T-cell (primary cell): ENCODE measurements at regions of chr19 and their contacts with region 1.

Region 1: DNA sequence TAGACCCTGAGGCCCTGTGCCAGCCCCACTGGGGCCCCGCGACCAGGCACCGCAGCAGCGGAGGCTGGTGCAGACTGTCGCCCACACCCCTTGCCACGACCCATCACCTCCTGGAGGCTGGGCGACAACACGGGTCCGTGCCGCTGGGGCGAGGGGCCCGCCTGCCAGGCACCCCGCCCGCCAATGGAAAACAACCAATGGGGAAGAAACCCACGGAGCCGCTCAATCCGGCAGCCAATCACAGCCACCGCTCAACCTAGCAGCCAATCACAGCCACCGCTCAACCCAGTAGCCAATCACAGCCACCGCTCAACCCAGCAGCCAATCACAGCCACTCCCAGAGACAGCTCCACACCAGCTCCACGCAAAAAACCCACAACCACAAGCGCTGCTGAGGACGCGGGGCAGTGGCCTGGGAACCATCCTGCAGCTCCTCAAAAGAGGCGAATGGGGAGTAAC is 29.7 kb downstream of the GPX4 start:
- DNase-seq: peak; percentile 40 to 90 (median 77)
- ATAC-seq: peak; percentile 24 to 60 (median 46)
- H3K4me3 ChIP-seq: peak overlapping the region in 1 of 2 donors; percentile 95
- H3K4me3 Mint-ChIP-seq: peak overlapping the region; percentile 39 to 79 (median 78)
- H3K27ac ChIP-seq: peak overlapping the region; percentile 90
- H3K27ac Mint-ChIP-seq: peak overlapping the region; percentile 80 to 84
- H3K4me1 ChIP-seq: peaks cover 13 to 70% of the 10 kb centered on the region in 2 experiments
- H3K4me1 Mint-ChIP-seq: peaks cover 26 to 44% (median 34%) of the 10 kb centered on the region in 3 donors
- H3K27me3 ChIP-seq: no peaks in the 10 kb centered on the region
- H3K27me3 Mint-ChIP-seq: no peaks in the 10 kb centered on the region

Region 2: DNA sequence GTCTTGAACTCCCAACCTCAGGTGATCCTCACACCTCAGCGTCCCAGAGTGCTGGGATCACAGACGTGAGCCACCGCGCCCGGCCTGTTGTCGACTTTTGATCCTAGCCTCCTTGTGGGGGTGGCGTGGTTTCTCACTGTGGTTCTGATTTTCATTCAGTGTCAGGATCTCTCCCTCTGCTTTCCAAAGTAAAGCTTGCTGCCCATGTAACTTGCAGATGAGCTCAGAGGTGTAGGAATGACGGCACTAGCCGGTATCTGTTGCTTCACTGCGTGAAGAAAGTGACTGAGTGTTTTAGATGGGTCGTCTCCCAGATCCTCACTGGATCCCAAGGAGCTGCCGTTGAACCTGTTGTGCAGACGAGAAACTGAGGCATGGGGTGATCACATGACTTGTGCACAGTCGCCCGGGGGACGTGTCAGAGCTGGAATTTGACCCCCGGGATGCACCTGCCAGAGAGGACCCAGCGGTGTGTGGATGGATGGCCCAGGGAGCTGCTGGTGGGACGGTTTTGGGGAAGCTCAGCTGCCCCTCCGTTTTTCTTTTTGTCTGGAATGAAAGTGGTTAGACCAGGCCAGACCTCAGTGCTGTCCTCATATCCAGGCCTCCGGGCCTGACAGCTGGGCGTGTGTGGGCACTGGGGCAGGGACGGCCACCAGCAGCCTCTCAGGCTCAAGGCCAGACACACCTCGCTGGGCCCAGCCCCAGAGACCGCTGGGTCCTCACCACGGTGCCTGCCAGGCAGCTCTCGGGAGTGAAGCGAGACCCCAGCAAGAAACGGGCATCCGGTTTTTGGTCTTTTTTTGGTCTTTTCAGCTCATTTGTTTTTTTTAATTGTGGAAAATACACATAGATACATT is 195.2 kb before region 1 on chr19:
- CTCF ChIA-PET with region 1: no interaction called
- POLR2A ChIA-PET with region 1: interaction called in 1 of 2 experiments, 12 read pairs
- DNase-seq: no peak
- ATAC-seq: no peak
- H3K4me3 ChIP-seq: no peak overlapping the region
- H3K4me3 Mint-ChIP-seq: peak overlapping the region in 1 of 3 donors; percentile 40
- H3K27ac ChIP-seq: no peak overlapping the region
- H3K27ac Mint-ChIP-seq: no peak overlapping the region
- H3K4me1 ChIP-seq: peaks cover 0 to 45% of the 10 kb centered on the region in 2 experiments
- H3K4me1 Mint-ChIP-seq: peaks cover 31 to 37% (median 36%) of the 10 kb centered on the region in 3 donors
- H3K27me3 ChIP-seq: no peaks in the 10 kb centered on the region
- H3K27me3 Mint-ChIP-seq: no peaks in the 10 kb centered on the region

Region 3: GRCh38 chr19:1243761-1244692 is 110.5 kb after region 1 on chr19:
- CTCF ChIA-PET with region 1: interaction called in 1 of 2 experiments, 11 read pairs
- POLR2A ChIA-PET with region 1: no interaction called
- DNase-seq: peak; percentile 72 to 92 (median 84)
- ATAC-seq: peak; percentile 38 to 41 (median 39)
- H3K4me3 ChIP-seq: no peak overlapping the region
- H3K4me3 Mint-ChIP-seq: peak overlapping the region; percentile 43 to 93 (median 59)
- H3K27ac ChIP-seq: peak overlapping the region; percentile 58
- H3K27ac Mint-ChIP-seq: peak overlapping the region; percentile 80 to 92
- H3K4me1 ChIP-seq: peaks cover 18 to 77% of the 10 kb centered on the region in 2 experiments
- H3K4me1 Mint-ChIP-seq: peaks cover 16 to 38% (median 38%) of the 10 kb centered on the region in 3 donors
- H3K27me3 ChIP-seq: peaks cover 0 to 11% of the 10 kb centered on the region in 2 experiments
- H3K27me3 Mint-ChIP-seq: no peaks in the 10 kb centered on the region

Region 4: GRCh38 chr19:2145831-2146241 is 1012.3 kb after region 1 on chr19:
- CTCF ChIA-PET with region 1: no interaction called
- POLR2A ChIA-PET with region 1: no interaction called
- DNase-seq: peak in 9 of 35 experiments; percentile 13 to 41 (median 24)
- ATAC-seq: peak in 3 of 4 experiments; percentile 11 to 70 (median 25)
- H3K4me3 ChIP-seq: no peak overlapping the region
- H3K4me3 Mint-ChIP-seq: peak overlapping the region in 2 of 3 donors; percentile 28 to 43
- H3K27ac ChIP-seq: no peak overlapping the region
- H3K27ac Mint-ChIP-seq: peak overlapping the region; percentile 16 to 52
- H3K4me1 ChIP-seq: peaks cover 13 to 60% of the 10 kb centered on the region in 2 experiments
- H3K4me1 Mint-ChIP-seq: peaks cover 57 to 62% (median 57%) of the 10 kb centered on the region in 3 donors
- H3K27me3 ChIP-seq: no peaks in the 10 kb centered on the region
- H3K27me3 Mint-ChIP-seq: no peaks in the 10 kb centered on the region